Calu3 (cell line): ENCODE measurements at regions of chr4 and their contacts with region 1.

Region 1: GRCh38 chr4:81069706-81070331 is 39.3 kb downstream of the BMP3 start:
- DNase-seq: peak; percentile 54
- H3K4me3 Mint-ChIP-seq: no peak overlapping the region
- H3K27ac Mint-ChIP-seq: no peak overlapping the region
- H3K4me1 Mint-ChIP-seq: peaks cover 9% of the 10 kb centered on the region
- H3K27me3 Mint-ChIP-seq: no peaks in the 10 kb centered on the region
- CTCF ChIP-seq: peak; percentile 42

Region 2: GRCh38 chr4:81255524-81255923 is 185.7 kb after region 1 on chr4:
- CTCF ChIA-PET with region 1: no interaction called
- intact Hi-C with region 1: loop called (anchors 5 kb)
- DNase-seq: no peak
- H3K4me3 Mint-ChIP-seq: no peak overlapping the region
- H3K27ac Mint-ChIP-seq: no peak overlapping the region
- H3K4me1 Mint-ChIP-seq: peaks cover 37% of the 10 kb centered on the region
- H3K27me3 Mint-ChIP-seq: no peaks in the 10 kb centered on the region
- CTCF ChIP-seq: no peak

Region 3: GRCh38 chr4:81351654-81352445 is 282.0 kb after region 1 on chr4:
- CTCF ChIA-PET with region 1: interaction called, 24 read pairs
- intact Hi-C with region 1: loop called (anchors 1 kb)
- DNase-seq: peak; percentile 61
- H3K4me3 Mint-ChIP-seq: no peak overlapping the region
- H3K27ac Mint-ChIP-seq: no peak overlapping the region
- H3K4me1 Mint-ChIP-seq: no peaks in the 10 kb centered on the region
- H3K27me3 Mint-ChIP-seq: peaks cover 7% of the 10 kb centered on the region
- CTCF ChIP-seq: no peak